ENCODE measurements at regions of chr19 and their contacts with region 1.

Region 1: GRCh38 chr19:38049105-38049649 is 142.2 kb downstream of the SIPA1L3 start:
- DNase-seq: peak; percentile 55
- ATAC-seq: peak; percentile 37
- H3K4me3 Mint-ChIP-seq: peak overlapping the region; percentile 79
- H3K27ac Mint-ChIP-seq: peak overlapping the region; percentile 99
- H3K4me1 Mint-ChIP-seq: peaks cover 75% of the 10 kb centered on the region
- H3K27me3 Mint-ChIP-seq: no peaks in the 10 kb centered on the region
- CTCF ChIP-seq: no peak

Region 2: GRCh38 chr19:37931881-37932655 is 117.1 kb before region 1 on chr19:
- CTCF ChIA-PET with region 1: interaction called, 5 read pairs
- POLR2A ChIA-PET with region 1: interaction called, 40 read pairs
- intact Hi-C with region 1: loop called (anchors 1 kb)
- DNase-seq: peak; percentile 52
- ATAC-seq: peak; percentile 30
- H3K4me3 Mint-ChIP-seq: peak overlapping the region; percentile 83
- H3K27ac Mint-ChIP-seq: peak overlapping the region; percentile 92
- H3K4me1 Mint-ChIP-seq: peaks cover 94% of the 10 kb centered on the region
- H3K27me3 Mint-ChIP-seq: no peaks in the 10 kb centered on the region
- CTCF ChIP-seq: no peak

Region 3: DNA sequence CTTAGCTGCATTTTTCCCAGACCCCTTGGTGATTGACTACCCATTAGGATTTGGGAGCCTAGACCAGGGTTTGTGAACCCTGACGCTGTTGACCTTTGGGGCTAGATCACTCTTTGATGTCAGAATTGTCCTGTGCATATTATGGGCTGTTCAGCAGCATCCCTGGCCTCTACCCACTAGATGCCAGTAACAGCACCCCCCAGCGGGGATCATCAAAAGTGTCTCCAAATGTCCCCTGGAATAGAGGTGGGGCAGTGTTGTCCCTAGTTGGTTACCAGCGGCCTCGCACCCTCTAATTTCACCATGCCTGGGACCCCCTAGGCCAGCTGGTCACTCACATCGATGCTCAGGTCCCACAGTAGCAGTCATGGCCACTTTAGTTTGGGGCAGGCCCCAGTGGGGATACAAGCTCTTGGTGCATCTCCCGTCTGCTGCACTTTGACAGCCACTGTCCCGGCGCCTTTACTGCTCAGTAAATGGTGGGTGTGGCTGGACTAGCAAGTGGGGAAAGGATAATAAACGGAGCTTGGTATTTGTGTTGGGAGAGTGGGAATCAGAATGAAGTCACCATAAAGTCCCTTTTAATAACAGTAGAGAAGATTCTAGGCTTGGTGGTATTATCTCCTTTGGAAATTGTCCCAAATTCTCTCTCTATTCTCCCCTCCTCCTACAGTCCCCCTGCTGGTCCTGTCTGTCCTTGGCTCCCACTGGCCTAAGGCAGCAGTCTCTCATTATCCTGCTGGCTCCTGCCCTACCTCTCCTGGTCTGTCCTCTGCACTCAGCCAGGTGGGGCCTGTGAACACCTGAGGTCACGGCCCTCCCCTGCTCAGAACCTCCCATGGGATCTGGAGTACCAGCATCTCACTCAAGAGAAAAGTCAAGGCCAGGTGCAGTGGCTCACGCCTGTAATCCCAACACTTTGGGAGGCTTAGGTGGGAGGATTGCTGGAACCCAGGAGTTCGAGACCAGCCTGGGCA is 61.5 kb before region 1 on chr19:
- CTCF ChIA-PET with region 1: interaction called, 8 read pairs
- POLR2A ChIA-PET with region 1: interaction called, 13 read pairs
- intact Hi-C with region 1: no loop called
- DNase-seq: no peak
- ATAC-seq: no peak
- H3K4me3 Mint-ChIP-seq: no peak overlapping the region
- H3K27ac Mint-ChIP-seq: peak overlapping the region; percentile 96
- H3K4me1 Mint-ChIP-seq: peaks cover 86% of the 10 kb centered on the region
- H3K27me3 Mint-ChIP-seq: no peaks in the 10 kb centered on the region
- CTCF ChIP-seq: no peak

Region 4: GRCh38 chr19:38022791-38023670 is 26.1 kb before region 1 on chr19:
- CTCF ChIA-PET with region 1: interaction called, 3 read pairs
- POLR2A ChIA-PET with region 1: interaction called, 12 read pairs
- intact Hi-C with region 1: no loop called
- DNase-seq: no peak
- ATAC-seq: no peak
- H3K4me3 Mint-ChIP-seq: peak overlapping the region; percentile 21
- H3K27ac Mint-ChIP-seq: peak overlapping the region; percentile 79
- H3K4me1 Mint-ChIP-seq: peaks cover 93% of the 10 kb centered on the region
- H3K27me3 Mint-ChIP-seq: no peaks in the 10 kb centered on the region
- CTCF ChIP-seq: no peak

Region 5: GRCh38 chr19:38095411-38096308 is 46.5 kb after region 1 on chr19:
- CTCF ChIA-PET with region 1: interaction called, 9 read pairs
- POLR2A ChIA-PET with region 1: interaction called, 14 read pairs
- intact Hi-C with region 1: loop called (anchors 2 kb)
- DNase-seq: peak; percentile 59
- ATAC-seq: peak; percentile 85
- H3K4me3 Mint-ChIP-seq: no peak overlapping the region
- H3K27ac Mint-ChIP-seq: peak overlapping the region; percentile 85
- H3K4me1 Mint-ChIP-seq: peaks cover 18% of the 10 kb centered on the region
- H3K27me3 Mint-ChIP-seq: no peaks in the 10 kb centered on the region
- CTCF ChIP-seq: peak; percentile 33

Region 6: DNA sequence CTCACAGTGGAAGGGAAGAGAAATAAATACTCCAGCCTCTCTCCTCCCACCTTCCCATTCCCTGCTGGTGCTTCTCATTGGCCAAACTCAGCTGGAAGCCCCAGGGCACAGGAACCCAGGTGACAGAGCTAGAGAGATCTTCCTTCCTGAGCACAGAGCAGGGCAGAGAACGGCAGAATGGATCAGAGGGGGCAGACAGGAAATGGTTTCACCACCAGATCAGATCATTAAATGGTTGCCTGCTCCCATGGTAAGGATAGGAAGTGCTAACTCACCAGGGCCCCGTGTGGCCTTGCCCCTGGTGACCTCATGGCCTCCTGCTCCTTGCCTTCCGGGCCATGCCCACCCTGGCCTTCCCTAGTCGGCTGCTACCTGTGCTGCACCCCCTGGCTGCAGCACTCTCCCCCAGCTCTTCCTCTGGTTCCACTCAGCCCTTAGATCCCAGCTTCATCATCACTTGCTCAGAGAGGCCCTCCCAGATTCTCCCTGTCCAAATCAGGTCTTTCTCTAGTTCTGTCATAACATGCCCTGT is 66.2 kb after region 1 on chr19:
- CTCF ChIA-PET with region 1: no interaction called
- POLR2A ChIA-PET with region 1: no interaction called
- intact Hi-C with region 1: no loop called
- DNase-seq: no peak
- ATAC-seq: peak; percentile 28
- H3K4me3 Mint-ChIP-seq: no peak overlapping the region
- H3K27ac Mint-ChIP-seq: peak overlapping the region; percentile 62
- H3K4me1 Mint-ChIP-seq: peaks cover 12% of the 10 kb centered on the region
- H3K27me3 Mint-ChIP-seq: no peaks in the 10 kb centered on the region
- CTCF ChIP-seq: no peak